ENCODE measurements at regions of chr22 and their contacts with region 1.

Region 1: GRCh38 chr22:37282385-37282677 is at the start of gene CYTH4:
- DNase-seq: no peak
- H3K4me3 ChIP-seq: no peak within 1 kb of the TSS
- H3K27ac ChIP-seq: no peak within 1 kb of the TSS
- H3K4me1 ChIP-seq: peaks cover 0 to 15% (median 4%) of the 10 kb centered on the region in 4 experiments; a peak in 4 of 7 replicates
- H3K27me3 ChIP-seq: no peaks in the 10 kb centered on the region; a peak in 2 of 7 replicates
- CTCF ChIP-seq: no peak
- EP300 ChIP-seq: no peak
- POLR2A ChIP-seq: no peak
- RAD21 ChIP-seq: no peak
- total RNA-seq, gene CYTH4: not detected in 2 replicates

Region 2: GRCh38 chr22:37244114-37244921 is 38.0 kb before region 1 on chr22 and contains the start of gene RAC2:
- CTCF ChIA-PET with region 1: no interaction called
- POLR2A ChIA-PET with region 1: no interaction called
- DNase-seq: no peak
- H3K4me3 ChIP-seq: no peak within 1 kb of the TSS
- H3K27ac ChIP-seq: no peak within 1 kb of the TSS
- H3K4me1 ChIP-seq: peaks cover 0 to 13% (median 6%) of the 10 kb centered on the region in 4 experiments; a peak in 6 of 7 replicates
- H3K27me3 ChIP-seq: no peaks in the 10 kb centered on the region
- CTCF ChIP-seq: no peak
- EP300 ChIP-seq: no peak
- POLR2A ChIP-seq: no peak
- RAD21 ChIP-seq: no peak
- total RNA-seq, gene RAC2: 2.1 and 2.3 TPM in 2 replicates

Region 3: GRCh38 chr22:37267135-37267587 is 15.2 kb before region 1 on chr22:
- CTCF ChIA-PET with region 1: interaction called, 32 read pairs
- POLR2A ChIA-PET with region 1: no interaction called
- DNase-seq: peak in 1 of 2 experiments; percentile 96
- H3K4me3 ChIP-seq: 0 out of 8 replicates have a peak overlapping the region, but pooled peaks of 1 of the 4 experiments have one; percentile 10
- H3K27ac ChIP-seq: no peak overlapping the region
- H3K4me1 ChIP-seq: peaks cover 0 to 2% (median 0%) of the 10 kb centered on the region in 4 experiments; a peak in 1 of 7 replicates
- H3K27me3 ChIP-seq: no peaks in the 10 kb centered on the region
- CTCF ChIP-seq: peak; percentile 66 to 91 (median 75)
- EP300 ChIP-seq: no peak
- POLR2A ChIP-seq: no peak
- RAD21 ChIP-seq: peak; percentile 75 to 87

Measured in H1 (cell line).